BJ (cell line): ENCODE measurements at regions of chr1 and their contacts with region 1.

Region 1: DNA sequence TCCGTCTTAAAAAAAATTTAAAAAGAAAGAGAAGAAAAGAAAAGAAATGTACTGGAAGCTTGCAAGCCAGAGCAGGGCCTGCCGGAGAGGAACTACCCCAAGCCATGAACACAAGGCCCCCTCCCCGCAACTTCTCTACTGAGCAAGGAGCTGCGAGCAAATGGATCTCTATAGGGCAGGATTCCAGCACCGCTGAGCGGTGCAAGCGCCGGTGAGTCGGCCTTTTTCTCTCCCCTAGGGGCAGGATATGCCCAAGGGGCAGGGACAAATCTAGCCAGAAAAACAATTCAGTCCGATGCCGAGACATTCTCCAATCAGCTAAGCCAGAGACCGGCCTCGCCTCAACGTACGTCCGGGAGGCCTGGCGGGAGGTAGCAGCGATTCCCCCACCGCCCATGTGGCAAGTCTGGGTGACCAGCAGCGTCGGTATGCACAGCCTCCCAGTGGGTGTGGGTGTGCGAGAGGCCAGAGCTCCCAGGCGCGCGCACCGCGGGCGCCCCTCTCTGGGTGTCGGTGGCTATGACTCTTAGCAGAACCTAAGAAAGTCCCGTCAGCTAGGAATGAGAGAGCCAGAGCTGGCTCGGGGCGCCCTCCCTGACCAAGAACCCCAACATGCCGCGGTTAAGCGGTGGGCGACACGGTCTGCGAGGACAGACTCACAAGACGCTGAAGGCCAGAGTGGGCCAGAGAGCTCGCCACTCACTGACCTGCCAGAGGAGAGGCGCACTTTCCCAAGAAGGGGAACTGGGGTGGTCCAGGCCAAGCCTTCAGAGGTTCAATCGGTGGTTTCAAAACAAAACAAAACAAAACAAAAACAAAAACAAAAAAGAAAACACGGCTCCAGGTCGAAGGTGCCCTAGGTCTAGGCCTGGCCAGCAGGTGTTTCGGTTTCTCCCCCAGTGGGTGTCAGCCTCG is 1.9 kb downstream of the CSMD2 start:
- DNase-seq: peak; percentile 77
- H3K4me3 ChIP-seq: peak overlapping the region; percentile 62
- H3K27me3 ChIP-seq: peaks cover 11% of the 10 kb centered on the region
- CTCF ChIP-seq: peak; percentile 93

Region 2: GRCh38 chr1:33633019-33633801 is 529.9 kb before region 1 on chr1:
- CTCF ChIA-PET with region 1: interaction called, 49 read pairs
- POLR2A ChIA-PET with region 1: no interaction called
- DNase-seq: peak; percentile 16
- H3K4me3 ChIP-seq: no peak overlapping the region
- H3K27me3 ChIP-seq: no peaks in the 10 kb centered on the region
- CTCF ChIP-seq: peak; percentile 100

Region 3: GRCh38 chr1:33654267-33654834 is 508.8 kb before region 1 on chr1:
- CTCF ChIA-PET with region 1: interaction called, 10 read pairs
- POLR2A ChIA-PET with region 1: no interaction called
- DNase-seq: no peak
- H3K4me3 ChIP-seq: no peak overlapping the region
- H3K27me3 ChIP-seq: no peaks in the 10 kb centered on the region
- CTCF ChIP-seq: peak; percentile 69

Region 4: DNA sequence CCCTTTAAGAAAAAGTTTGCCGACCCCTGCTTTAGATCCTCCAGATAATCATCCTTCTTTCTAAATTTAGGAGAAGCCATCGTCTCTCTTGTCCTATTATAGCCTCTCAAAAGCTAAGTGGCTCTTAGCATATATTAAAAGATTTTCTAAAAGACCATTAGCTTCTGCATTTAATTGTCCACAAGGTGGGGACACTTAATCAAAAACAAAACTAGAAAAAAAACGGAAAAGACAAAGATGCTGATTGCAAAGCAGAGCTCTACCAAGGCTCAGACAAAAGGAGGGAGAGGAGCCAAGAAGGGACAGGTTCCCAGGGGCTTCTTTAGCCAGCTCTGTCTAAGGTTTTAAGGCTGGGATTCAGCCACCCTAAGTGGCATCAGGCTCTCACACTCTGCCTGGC is 427.5 kb before region 1 on chr1:
- CTCF ChIA-PET with region 1: interaction called, 70 read pairs
- POLR2A ChIA-PET with region 1: no interaction called
- DNase-seq: no peak
- H3K4me3 ChIP-seq: no peak overlapping the region
- H3K27me3 ChIP-seq: no peaks in the 10 kb centered on the region
- CTCF ChIP-seq: peak; percentile 44

Region 5: GRCh38 chr1:34131396-34132160 is 31.5 kb before region 1 on chr1:
- CTCF ChIA-PET with region 1: interaction called, 10 read pairs
- POLR2A ChIA-PET with region 1: no interaction called
- DNase-seq: no peak
- H3K4me3 ChIP-seq: no peak overlapping the region
- H3K27me3 ChIP-seq: no peaks in the 10 kb centered on the region
- CTCF ChIP-seq: no peak